ENCODE measurements at regions of chr10 and their contacts with region 1.

Region 1: DNA sequence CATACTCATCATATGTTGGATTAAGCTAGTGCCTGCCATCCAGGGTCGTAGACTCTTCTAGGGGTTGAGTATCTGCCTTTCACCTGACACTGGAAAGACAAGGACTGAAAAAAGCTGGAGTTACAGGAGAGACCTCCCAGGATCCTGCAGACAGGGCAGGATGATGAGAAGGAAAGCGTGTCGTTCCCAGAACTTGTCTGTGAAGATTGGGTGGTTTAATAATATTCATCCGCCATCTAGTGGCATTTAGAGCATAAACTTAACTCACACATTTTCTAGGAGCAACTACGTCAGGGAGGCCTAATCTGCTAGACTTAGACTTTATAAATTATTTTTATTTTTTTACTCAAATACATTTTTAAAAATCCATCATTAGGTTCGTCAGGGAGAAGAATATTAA is 59.6 kb downstream of the ADRB1 start:
- DNase-seq: no peak
- ATAC-seq: peak; percentile 76
- H3K4me3 ChIP-seq: no peak overlapping the region
- H3K27ac ChIP-seq: no peak overlapping the region
- H3K4me1 ChIP-seq: no peaks in the 10 kb centered on the region
- H3K27me3 ChIP-seq: no peaks in the 10 kb centered on the region

Region 2: DNA sequence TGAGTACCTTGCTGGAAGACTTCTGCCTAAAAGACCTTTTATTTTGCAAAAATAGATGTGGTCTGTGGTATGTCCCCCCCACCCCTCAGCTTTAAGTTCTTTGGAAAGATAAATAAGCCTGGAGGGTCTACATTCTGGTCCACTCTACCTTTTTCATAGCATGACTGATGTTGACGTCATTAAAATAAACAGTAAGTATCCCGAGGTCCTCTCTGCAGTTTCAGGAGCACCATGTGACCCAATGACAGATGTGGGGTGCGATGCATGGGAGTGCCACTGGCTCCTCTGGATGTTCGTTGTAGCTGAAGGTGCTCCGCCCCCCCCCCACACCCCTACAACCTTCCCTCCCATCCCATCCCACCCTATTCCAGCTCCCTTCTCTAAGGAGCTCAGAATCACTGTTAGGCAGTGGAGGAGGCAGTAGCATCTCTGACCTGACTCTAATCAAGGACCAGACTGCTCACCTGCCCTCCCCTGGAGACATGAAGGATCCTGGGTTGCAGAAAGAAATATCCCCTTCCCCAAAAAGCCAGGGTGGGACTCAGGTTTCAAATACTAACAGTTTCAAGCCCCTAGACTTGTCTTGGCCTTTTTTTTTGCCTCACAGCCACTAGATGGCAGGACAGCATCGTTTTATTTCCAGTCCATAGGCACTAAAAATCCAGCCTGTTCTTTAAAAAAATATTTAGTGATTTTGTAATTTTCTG is 398.5 kb before region 1 on chr10:
- intact Hi-C with region 1: loop called in 1 of 2 experiments (anchors 10 kb)
- DNase-seq: no peak
- ATAC-seq: no peak
- H3K4me3 ChIP-seq: no peak overlapping the region
- H3K27ac ChIP-seq: no peak overlapping the region
- H3K4me1 ChIP-seq: no peaks in the 10 kb centered on the region
- H3K27me3 ChIP-seq: no peaks in the 10 kb centered on the region

Region 3: DNA sequence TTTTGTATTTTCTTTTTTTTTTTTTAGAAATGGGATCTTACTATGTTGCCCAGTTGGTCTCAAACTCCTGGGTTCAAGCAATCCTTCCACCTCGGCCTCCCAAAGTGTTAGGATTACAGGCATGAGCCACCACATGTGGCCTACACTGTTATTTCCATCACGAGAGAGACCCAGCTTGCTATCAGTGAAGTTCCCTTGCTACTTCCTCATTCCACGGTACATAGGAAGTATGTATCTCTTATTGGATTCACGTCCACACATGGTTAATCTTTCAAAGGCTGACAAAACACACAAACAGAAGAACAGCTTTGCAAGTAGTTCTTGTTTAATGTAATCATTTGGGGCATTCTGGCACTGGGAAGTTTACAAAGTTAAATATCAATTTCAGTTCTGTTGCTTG is 300.3 kb before region 1 on chr10:
- intact Hi-C with region 1: loop called (anchors 1 to 2 kb)
- DNase-seq: no peak
- ATAC-seq: no peak
- H3K4me3 ChIP-seq: no peak overlapping the region
- H3K27ac ChIP-seq: no peak overlapping the region
- H3K4me1 ChIP-seq: no peaks in the 10 kb centered on the region
- H3K27me3 ChIP-seq: peaks cover 0 to 1% of the 10 kb centered on the region in 2 donors